IMR-90 (cell line): ENCODE measurements at regions of chr15 and their contacts with region 1.

Region 1: GRCh38 chr15:47196057-47196456 is 521.2 kb upstream of the SEMA6D start:
- DNase-seq: peak; percentile 87
- ATAC-seq: peak; percentile 100
- H3K4me3 ChIP-seq: no peak overlapping the region
- H3K27ac ChIP-seq: no peak overlapping the region
- H3K4me1 ChIP-seq: no peaks in the 10 kb centered on the region
- H3K27me3 ChIP-seq: peaks cover 2% of the 10 kb centered on the region
- CTCF ChIP-seq: peak; percentile 91
- POLR2A ChIP-seq: peak; percentile 47; the same call in 1 of the 2 replicates
- RAD21 ChIP-seq: peak; percentile 100

Region 2: GRCh38 chr15:47158573-47158972 is 37.5 kb before region 1 on chr15:
- CTCF ChIA-PET with region 1: no interaction called
- POLR2A ChIA-PET with region 1: no interaction called
- dilution Hi-C with region 1: no loop called
- in situ Hi-C with region 1: no loop called
- intact Hi-C with region 1: no loop called
- DNase-seq: no peak
- ATAC-seq: no peak
- H3K4me3 ChIP-seq: no peak overlapping the region
- H3K27ac ChIP-seq: no peak overlapping the region
- H3K4me1 ChIP-seq: no peaks in the 10 kb centered on the region
- H3K27me3 ChIP-seq: no peaks in the 10 kb centered on the region
- CTCF ChIP-seq: no peak
- POLR2A ChIP-seq: no peak
- RAD21 ChIP-seq: no peak

Region 3: GRCh38 chr15:47331841-47332393 is 135.9 kb after region 1 on chr15:
- CTCF ChIA-PET with region 1: no interaction called
- POLR2A ChIA-PET with region 1: no interaction called
- dilution Hi-C with region 1: no loop called
- in situ Hi-C with region 1: no loop called
- intact Hi-C with region 1: loop called (anchors 2 kb)
- DNase-seq: peak; percentile 83
- ATAC-seq: peak; percentile 81
- H3K4me3 ChIP-seq: no peak overlapping the region
- H3K27ac ChIP-seq: peak overlapping the region; percentile 80; the same call in 1 of the 2 replicates
- H3K4me1 ChIP-seq: peaks cover 5% of the 10 kb centered on the region
- H3K27me3 ChIP-seq: no peaks in the 10 kb centered on the region
- CTCF ChIP-seq: no peak
- POLR2A ChIP-seq: no peak
- RAD21 ChIP-seq: no peak

Region 4: DNA sequence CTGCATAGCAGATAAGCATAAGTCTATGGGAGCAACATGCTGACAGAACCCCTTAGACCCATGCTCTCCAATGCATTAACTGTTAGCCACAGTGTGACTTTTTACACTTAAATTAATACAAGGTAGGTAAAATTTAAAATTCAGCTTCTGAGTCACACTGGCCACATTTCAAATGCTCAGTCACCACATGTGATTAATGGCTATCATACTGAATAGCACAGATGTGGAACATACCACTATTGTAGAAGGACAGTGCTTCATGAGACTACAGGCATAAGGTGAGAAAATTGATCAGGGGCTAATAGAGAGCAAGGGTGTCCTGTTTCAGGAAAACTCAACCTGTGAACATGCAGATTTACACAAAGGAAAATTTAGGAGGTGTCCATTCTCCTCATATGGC is 164.2 kb after region 1 on chr15:
- CTCF ChIA-PET with region 1: no interaction called
- POLR2A ChIA-PET with region 1: no interaction called
- dilution Hi-C with region 1: no loop called
- in situ Hi-C with region 1: no loop called
- intact Hi-C with region 1: no loop called
- DNase-seq: peak; percentile 21
- ATAC-seq: no peak
- H3K4me3 ChIP-seq: no peak overlapping the region
- H3K27ac ChIP-seq: no peak overlapping the region
- H3K4me1 ChIP-seq: no peaks in the 10 kb centered on the region; the same call in 1 of the 2 replicates
- H3K27me3 ChIP-seq: no peaks in the 10 kb centered on the region
- CTCF ChIP-seq: no peak
- POLR2A ChIP-seq: no peak
- RAD21 ChIP-seq: no peak

Region 5: GRCh38 chr15:47609693-47610092 is 413.6 kb after region 1 on chr15:
- CTCF ChIA-PET with region 1: no interaction called
- POLR2A ChIA-PET with region 1: no interaction called
- dilution Hi-C with region 1: no loop called
- in situ Hi-C with region 1: no loop called
- intact Hi-C with region 1: loop called (anchors 5 kb)
- DNase-seq: no peak
- ATAC-seq: no peak
- H3K4me3 ChIP-seq: no peak overlapping the region
- H3K27ac ChIP-seq: no peak overlapping the region
- H3K4me1 ChIP-seq: no peaks in the 10 kb centered on the region
- H3K27me3 ChIP-seq: no peaks in the 10 kb centered on the region; the same call in 1 of the 2 replicates
- CTCF ChIP-seq: no peak
- POLR2A ChIP-seq: no peak
- RAD21 ChIP-seq: no peak

Region 6: DNA sequence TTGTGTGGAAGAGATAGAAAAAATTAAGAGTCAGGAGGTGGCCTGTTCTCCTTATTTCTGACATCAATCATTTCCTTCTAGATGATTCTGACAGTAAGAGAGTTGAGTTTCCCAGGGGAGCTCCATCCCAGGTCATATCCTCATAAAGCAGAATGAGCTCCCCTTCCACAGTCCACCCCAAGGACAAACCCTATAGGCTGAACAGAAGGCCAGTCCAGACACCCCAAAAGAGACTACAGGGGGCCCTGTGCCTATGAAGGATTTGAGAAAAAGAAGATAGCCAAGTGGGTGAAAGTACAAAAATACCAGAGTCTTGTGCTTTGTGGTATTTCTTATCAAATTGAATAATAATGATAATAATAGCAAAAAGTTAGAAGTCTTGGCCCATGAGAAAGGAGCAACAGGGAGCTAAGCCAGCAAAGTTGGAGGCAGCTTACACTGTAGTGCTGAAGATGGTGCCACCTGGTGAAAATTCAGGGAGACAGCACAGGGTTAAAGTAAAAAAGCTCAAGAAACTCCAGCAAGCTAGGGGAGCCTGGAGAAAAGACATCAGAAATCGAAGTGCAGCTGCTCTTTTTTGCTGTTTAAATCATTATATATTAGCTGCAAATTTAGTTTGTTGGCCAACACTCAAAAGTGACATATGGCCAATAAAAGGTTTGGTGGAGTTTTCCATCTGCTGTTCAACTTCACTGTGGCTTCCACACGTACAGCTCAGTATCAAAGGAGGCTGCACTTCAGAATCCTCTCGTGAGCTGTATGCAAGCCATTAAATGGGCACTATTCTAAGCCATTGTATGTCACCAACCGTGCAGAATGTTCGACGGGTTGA is 888.9 kb after region 1 on chr15:
- CTCF ChIA-PET with region 1: interaction called, 3 read pairs
- POLR2A ChIA-PET with region 1: no interaction called
- dilution Hi-C with region 1: no loop called
- in situ Hi-C with region 1: loop called (anchors 10 kb)
- intact Hi-C with region 1: loop called (anchors 2 kb)
- DNase-seq: peak; percentile 50
- ATAC-seq: peak; percentile 79
- H3K4me3 ChIP-seq: no peak overlapping the region
- H3K27ac ChIP-seq: no peak overlapping the region
- H3K4me1 ChIP-seq: no peaks in the 10 kb centered on the region
- H3K27me3 ChIP-seq: peaks cover 12% of the 10 kb centered on the region
- CTCF ChIP-seq: peak; percentile 51
- POLR2A ChIP-seq: no peak
- RAD21 ChIP-seq: peak; percentile 53

Region 7: GRCh38 chr15:48285329-48286214 is 1089.5 kb after region 1 on chr15:
- CTCF ChIA-PET with region 1: interaction called, 9 read pairs
- POLR2A ChIA-PET with region 1: no interaction called
- dilution Hi-C with region 1: no loop called
- in situ Hi-C with region 1: loop called (anchors 10 kb)
- intact Hi-C with region 1: loop called (anchors 1 kb)
- DNase-seq: peak; percentile 92
- ATAC-seq: peak; percentile 91
- H3K4me3 ChIP-seq: no peak overlapping the region
- H3K27ac ChIP-seq: no peak overlapping the region
- H3K4me1 ChIP-seq: no peaks in the 10 kb centered on the region; the same call in none of the 2 replicates
- H3K27me3 ChIP-seq: no peaks in the 10 kb centered on the region; the same call in 1 of the 2 replicates
- CTCF ChIP-seq: peak; percentile 78
- POLR2A ChIP-seq: no peak
- RAD21 ChIP-seq: peak; percentile 72